GM23248 (cell line): ENCODE measurements at regions of chr15 and their contacts with region 1.

Region 1: DNA sequence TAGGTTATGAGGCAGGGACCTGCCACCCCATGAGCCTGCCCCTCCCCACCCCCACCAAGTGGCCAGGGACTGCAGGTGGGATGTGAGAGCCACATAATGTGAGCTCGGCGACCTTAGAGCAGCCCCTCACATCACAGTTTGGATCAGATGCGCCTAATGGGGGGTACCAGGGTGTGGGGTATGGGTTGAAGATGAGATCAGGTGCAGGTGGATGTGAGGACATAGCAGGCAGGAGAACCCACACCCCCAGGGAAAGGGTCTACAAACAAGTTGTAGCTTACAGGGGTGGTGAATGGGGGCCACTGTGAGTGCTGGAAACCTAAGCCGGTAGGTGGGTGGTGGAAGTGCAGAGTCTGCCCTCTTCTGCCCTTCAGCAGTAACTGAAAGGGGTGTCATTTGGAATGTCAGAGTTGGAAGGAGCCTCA is 94.0 kb downstream of the CORO2B start:
- DNase-seq: peak; percentile 28
- H3K4me3 ChIP-seq: no peak overlapping the region
- H3K27ac ChIP-seq: no peak overlapping the region
- H3K4me1 ChIP-seq: no peaks in the 10 kb centered on the region
- H3K27me3 ChIP-seq: no peaks in the 10 kb centered on the region

Region 2: GRCh38 chr15:68550481-68551295 is 122.1 kb before region 1 on chr15:
- in situ Hi-C with region 1: loop called (anchors 5 kb)
- DNase-seq: peak; percentile 59
- H3K4me3 ChIP-seq: no peak overlapping the region
- H3K27ac ChIP-seq: no peak overlapping the region
- H3K4me1 ChIP-seq: peaks cover 5% of the 10 kb centered on the region; the same call in 1 of the 2 replicates
- H3K27me3 ChIP-seq: no peaks in the 10 kb centered on the region

Region 3: GRCh38 chr15:68730471-68730919 is 57.7 kb after region 1 on chr15:
- in situ Hi-C with region 1: loop called (anchors 10 kb)
- DNase-seq: peak; percentile 68
- H3K4me3 ChIP-seq: no peak overlapping the region
- H3K27ac ChIP-seq: no peak overlapping the region
- H3K4me1 ChIP-seq: peaks cover 4% of the 10 kb centered on the region; the same call in 1 of the 2 replicates
- H3K27me3 ChIP-seq: no peaks in the 10 kb centered on the region

Region 4: GRCh38 chr15:68957696-68958095 is 284.9 kb after region 1 on chr15:
- in situ Hi-C with region 1: no loop called
- DNase-seq: no peak
- H3K4me3 ChIP-seq: no peak overlapping the region
- H3K27ac ChIP-seq: no peak overlapping the region
- H3K4me1 ChIP-seq: no peaks in the 10 kb centered on the region
- H3K27me3 ChIP-seq: peaks cover 69% of the 10 kb centered on the region